ENCODE measurements at regions of chr3 and their contacts with region 1.

Region 1: GRCh38 chr3:136818769-136819391 is at the start of gene SLC35G2:
- DNase-seq: peak; percentile 79
- H3K4me3 Mint-ChIP-seq: peak within 1 kb of the TSS; percentile 87
- H3K27ac Mint-ChIP-seq: peak within 1 kb of the TSS; percentile 81
- H3K4me1 Mint-ChIP-seq: peaks cover 21% of the 10 kb centered on the region
- H3K27me3 Mint-ChIP-seq: peaks cover 38% of the 10 kb centered on the region
- total RNA-seq, gene SLC35G2: 3.4 and 3.8 TPM in 2 replicates

Region 2: DNA sequence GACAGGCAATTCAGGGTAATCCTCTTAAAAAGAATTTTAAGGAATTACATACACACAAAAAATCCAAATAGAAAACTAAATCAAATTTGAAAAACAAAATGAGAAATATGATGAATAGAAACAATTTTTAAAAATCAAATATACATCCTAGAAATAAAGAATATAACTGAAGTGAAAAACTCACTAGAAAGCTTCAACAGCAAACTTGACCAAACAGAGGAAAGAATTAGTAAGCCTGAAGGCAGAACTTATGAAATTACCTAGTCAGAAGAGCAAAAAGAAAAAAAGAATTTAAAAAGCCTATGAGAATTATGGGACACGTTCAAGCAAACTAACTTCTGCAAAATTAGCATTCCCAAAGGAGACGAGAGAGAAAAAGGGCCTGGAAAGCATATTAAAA is 362.7 kb before region 1 on chr3:
- intact Hi-C with region 1: no loop called
- DNase-seq: no peak
- H3K4me3 Mint-ChIP-seq: no peak overlapping the region
- H3K27ac Mint-ChIP-seq: no peak overlapping the region
- H3K4me1 Mint-ChIP-seq: no peaks in the 10 kb centered on the region
- H3K27me3 Mint-ChIP-seq: no peaks in the 10 kb centered on the region

Region 3: DNA sequence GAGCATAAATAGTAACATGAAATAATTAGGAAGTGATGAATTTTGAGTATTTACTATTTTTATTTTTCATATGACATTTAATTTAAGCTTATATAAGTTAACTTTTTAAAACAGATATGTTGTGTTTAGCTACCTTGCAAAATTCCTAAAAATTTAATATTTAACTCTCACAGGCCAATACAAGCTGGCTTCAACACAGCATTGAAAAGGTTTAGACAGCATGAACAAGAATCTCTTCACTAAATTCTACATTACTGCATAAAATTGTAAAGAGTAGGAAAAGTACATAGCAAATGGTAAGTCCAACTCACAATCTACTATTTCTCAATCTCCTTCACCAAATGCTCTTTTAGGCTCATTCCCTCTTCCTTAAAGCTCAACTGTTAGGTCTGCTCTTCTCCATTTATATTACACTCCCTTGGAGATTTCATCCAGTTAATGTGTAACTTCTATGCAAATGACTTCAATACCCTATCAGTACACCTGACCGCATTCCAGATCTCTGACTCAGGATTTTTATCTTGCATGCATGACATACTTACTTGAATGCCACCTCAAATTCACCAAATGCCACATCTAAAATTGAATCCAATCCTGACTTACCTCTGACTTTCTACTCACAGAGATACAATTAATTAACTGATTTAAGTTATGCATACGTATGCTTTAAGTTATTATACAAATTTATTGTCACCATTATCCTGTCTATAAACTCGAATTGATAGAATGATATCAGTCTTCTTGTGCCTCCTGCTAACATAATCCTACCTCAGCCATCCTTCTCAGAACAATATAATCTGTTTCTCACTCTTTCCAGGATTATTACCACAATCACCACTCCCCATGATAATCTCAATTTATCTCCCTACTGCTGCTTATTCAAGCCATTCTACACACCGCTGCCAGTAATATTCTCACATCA is 193.7 kb before region 1 on chr3:
- intact Hi-C with region 1: no loop called
- DNase-seq: no peak
- H3K4me3 Mint-ChIP-seq: no peak overlapping the region
- H3K27ac Mint-ChIP-seq: no peak overlapping the region
- H3K4me1 Mint-ChIP-seq: peaks cover 8% of the 10 kb centered on the region
- H3K27me3 Mint-ChIP-seq: no peaks in the 10 kb centered on the region

Region 4: GRCh38 chr3:136838641-136839555 is 20.0 kb after region 1 on chr3:
- intact Hi-C with region 1: loop called (anchors 2 kb)
- DNase-seq: no peak
- H3K4me3 Mint-ChIP-seq: peak overlapping the region; percentile 6
- H3K27ac Mint-ChIP-seq: peak overlapping the region; percentile 47
- H3K4me1 Mint-ChIP-seq: peaks cover 27% of the 10 kb centered on the region
- H3K27me3 Mint-ChIP-seq: no peaks in the 10 kb centered on the region

Region 5: DNA sequence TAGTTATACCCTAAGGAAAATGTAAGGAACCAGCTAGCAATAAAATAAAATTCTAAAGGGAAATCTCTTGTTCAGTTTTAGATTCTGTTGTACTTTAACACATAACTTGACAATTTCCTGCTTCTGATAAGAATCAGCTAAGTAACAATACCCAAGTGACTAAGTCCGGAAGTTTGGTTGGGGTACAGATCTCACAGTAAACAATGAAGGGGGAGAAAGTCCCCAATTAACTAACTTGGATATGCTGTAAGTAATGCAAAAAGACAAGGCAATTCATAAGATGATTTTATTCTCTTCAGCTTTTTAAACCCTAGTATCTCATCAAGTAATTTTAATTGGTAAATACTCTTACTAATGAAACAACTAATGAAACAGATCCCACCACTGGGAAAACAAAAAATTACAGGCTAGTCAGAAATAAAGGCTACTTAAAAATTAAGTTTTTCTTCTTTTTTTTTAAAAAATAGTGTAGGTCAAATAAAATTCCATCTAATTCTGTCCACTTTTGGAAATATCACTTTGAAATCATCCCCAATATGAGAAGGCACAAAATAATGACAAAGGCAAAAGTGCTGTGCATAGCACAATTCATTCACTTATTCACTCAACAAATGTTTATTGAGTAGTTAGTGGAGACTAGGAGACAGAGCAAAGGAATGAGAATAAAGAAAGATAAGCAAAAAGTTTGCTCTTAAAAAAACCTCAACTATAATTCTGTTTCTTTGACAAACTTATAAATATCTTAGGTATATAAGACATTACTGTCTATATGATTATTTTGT is 101.1 kb after region 1 on chr3:
- intact Hi-C with region 1: loop called (anchors 5 kb)
- DNase-seq: peak; percentile 81
- H3K4me3 Mint-ChIP-seq: peak overlapping the region; percentile 51
- H3K27ac Mint-ChIP-seq: peak overlapping the region; percentile 53
- H3K4me1 Mint-ChIP-seq: peaks cover 42% of the 10 kb centered on the region
- H3K27me3 Mint-ChIP-seq: no peaks in the 10 kb centered on the region

Region 6: DNA sequence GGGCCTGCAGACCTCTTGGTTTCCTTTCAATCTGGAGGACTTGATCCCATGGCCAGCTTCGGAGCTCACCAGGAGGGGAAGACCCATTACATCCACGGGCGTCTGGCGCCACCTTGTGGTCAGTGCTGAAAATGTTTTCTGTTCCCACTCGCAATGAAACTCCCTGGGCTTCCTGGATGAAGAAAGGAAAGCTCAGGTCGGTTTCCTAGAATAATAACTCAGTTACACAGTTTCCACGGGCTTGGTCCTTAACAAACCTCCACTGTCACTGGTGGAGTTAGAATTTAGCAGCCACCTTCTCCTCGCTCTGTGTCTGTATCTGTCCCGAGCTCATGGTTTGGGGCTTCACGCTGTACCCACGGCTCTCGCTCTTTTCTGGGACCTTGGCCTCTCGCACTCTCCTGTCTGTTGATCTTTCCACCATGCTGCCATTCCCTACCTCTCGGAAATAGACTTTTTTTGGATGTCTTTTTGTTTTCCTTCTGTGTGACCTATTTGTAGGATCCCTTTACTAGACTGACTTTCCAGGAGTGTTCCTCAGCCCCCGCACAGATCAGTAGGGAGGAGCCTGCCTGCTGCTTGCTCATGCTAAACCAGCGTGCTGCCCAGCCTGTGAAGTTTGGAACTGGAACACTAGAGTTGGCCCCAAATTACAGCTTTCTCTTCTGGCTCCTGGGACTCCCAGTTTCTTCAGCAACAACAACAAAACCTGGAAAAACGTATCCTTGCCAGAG is 195.2 kb after region 1 on chr3:
- intact Hi-C with region 1: loop called (anchors 1 kb)
- DNase-seq: peak; percentile 95
- H3K4me3 Mint-ChIP-seq: peak overlapping the region; percentile 77
- H3K27ac Mint-ChIP-seq: no peak overlapping the region
- H3K4me1 Mint-ChIP-seq: peaks cover 10% of the 10 kb centered on the region
- H3K27me3 Mint-ChIP-seq: peaks cover 3% of the 10 kb centered on the region

Measured in activated CD4-positive, alpha-beta T cell treated with anti-CD3 and anti-CD28 coated beads, Interleukin-2, amount 10 ng/mL, durations not matched to agents 24 days and 14 days (primary cell).